Prostate gland (tissue), 2 donors: ENCODE measurements at regions of chr1 and their contacts with region 1.

Region 1: DNA sequence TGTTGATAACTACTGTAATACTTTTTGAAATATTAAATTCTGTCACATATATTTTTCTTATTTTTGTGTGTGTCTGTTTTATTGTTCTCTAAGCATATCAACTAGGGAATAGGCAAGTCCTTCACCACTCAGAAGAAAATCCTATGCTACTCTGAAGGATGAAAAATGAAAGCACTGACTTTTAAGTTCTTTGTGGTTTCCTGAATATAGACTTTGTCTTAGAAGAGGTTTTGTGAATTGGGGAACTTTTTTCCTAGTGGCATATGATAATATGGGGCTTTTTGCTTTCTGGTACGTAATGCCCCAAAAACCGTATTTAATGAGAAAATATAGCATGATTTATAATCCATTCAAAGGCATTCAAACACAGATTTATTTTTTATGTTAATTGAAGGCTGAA is 136.0 kb downstream of the SNX7 start:
- DNase-seq: no peak
- H3K4me3 ChIP-seq: no peak overlapping the region
- H3K27ac ChIP-seq: no peak overlapping the region
- H3K4me1 ChIP-seq: no peaks in the 10 kb centered on the region
- H3K27me3 ChIP-seq: no peaks in the 10 kb centered on the region
- CTCF ChIP-seq: no peak
- POLR2A ChIP-seq: no peak

Region 2: DNA sequence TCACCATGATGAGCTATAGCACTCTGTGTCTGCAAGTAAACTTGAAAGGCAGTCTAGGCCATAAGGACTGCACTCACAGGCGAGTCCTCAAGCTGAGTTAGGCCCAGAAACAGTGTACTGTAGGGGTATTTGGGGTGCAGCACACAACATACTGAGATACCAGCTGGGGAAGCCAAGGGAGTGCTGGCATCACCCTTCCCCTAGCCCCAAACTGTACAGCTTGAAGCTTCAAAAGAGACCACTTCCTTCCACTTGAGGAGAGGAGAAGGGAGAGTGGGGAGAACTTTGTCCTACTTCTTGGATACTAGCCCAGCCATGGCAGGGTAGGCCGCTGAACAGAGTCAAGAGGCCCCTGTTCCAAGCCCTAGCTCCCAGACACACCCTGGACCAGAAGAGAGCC is 160.2 kb before region 1 on chr1:
- intact Hi-C with region 1: loop called (anchors 5 kb)
- DNase-seq: no peak
- H3K4me3 ChIP-seq: no peak overlapping the region
- H3K27ac ChIP-seq: no peak overlapping the region
- H3K4me1 ChIP-seq: no peaks in the 10 kb centered on the region
- H3K27me3 ChIP-seq: no peaks in the 10 kb centered on the region
- CTCF ChIP-seq: no peak
- POLR2A ChIP-seq: no peak

Region 3: DNA sequence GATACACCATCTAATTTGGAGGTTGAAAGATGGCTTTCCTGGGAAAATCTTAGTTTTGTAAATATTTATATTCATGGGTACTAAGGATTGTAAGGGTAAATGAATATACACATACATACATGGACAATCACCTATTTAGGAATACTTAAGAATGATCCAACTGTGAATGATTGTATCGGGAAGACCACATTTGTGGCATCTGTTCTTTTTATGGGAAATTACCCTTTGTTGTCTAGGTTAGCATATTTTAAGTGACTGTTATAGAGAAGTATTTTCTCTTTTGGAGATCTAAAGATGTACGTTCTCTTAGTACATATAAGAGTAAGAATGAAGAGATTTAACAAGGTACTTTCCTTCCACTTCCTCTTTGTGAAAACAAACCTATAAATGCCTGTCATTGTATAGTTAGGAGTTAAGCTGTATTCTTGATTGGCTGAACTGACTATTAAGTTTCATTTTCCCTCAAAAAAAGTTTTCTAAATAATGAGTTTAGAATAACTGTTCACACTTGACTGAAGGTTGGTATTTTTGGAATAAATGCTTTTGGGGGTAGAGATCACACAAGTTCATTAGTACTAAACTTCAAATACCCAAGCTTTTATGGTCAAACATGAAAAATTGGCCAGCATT is 109.3 kb before region 1 on chr1:
- intact Hi-C with region 1: no loop called
- DNase-seq: no peak
- H3K4me3 ChIP-seq: no peak overlapping the region
- H3K27ac ChIP-seq: no peak overlapping the region
- H3K4me1 ChIP-seq: no peaks in the 10 kb centered on the region
- H3K27me3 ChIP-seq: no peaks in the 10 kb centered on the region
- CTCF ChIP-seq: no peak
- POLR2A ChIP-seq: no peak

Region 4: DNA sequence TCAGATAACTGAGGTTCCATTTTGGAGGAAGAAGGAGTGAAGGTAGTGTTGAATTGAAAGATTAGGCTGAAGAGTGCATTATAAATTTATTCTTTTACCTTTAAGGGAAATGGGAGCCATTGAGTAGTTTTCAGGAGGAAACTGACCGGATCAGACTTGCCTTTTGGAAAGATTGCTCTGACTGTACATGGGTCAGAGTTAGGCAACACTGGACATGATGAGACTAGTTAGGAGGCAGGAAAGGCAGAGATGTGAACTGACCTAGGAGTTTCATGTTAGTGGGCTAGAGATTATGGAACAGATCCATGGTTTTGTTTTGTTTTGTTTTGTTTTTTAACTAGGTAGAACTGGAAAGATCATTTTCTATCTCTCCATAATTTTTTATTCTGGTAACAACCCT is 57.7 kb before region 1 on chr1:
- intact Hi-C with region 1: no loop called
- DNase-seq: peak; percentile 40
- H3K4me3 ChIP-seq: no peak overlapping the region
- H3K27ac ChIP-seq: no peak overlapping the region
- H3K4me1 ChIP-seq: no peaks in the 10 kb centered on the region
- H3K27me3 ChIP-seq: no peaks in the 10 kb centered on the region
- CTCF ChIP-seq: no peak
- POLR2A ChIP-seq: no peak

Region 5: GRCh38 chr1:98754176-98754575 is 43.3 kb before region 1 on chr1:
- intact Hi-C with region 1: no loop called
- DNase-seq: no peak
- H3K4me3 ChIP-seq: no peak overlapping the region
- H3K27ac ChIP-seq: no peak overlapping the region
- H3K4me1 ChIP-seq: no peaks in the 10 kb centered on the region
- H3K27me3 ChIP-seq: no peaks in the 10 kb centered on the region
- CTCF ChIP-seq: no peak
- POLR2A ChIP-seq: no peak